ENCODE measurements at regions of chr3 and their contacts with region 1.

Region 1: GRCh38 chr3:109023656-109024254 is 70.1 kb upstream of the GUCA1C start:
- DNase-seq: peak; percentile 58
- ATAC-seq: peak; percentile 71
- H3K4me3 ChIP-seq: no peak overlapping the region
- H3K27ac ChIP-seq: no peak overlapping the region
- H3K4me1 ChIP-seq: no peaks in the 10 kb centered on the region
- H3K27me3 ChIP-seq: peaks cover 24% of the 10 kb centered on the region
- CTCF ChIP-seq: peak; percentile 92

Region 2: GRCh38 chr3:109081746-109082510 is 58.2 kb after region 1 on chr3:
- CTCF ChIA-PET with region 1: interaction called, 5 read pairs
- POLR2A ChIA-PET with region 1: no interaction called
- intact Hi-C with region 1: loop called (anchors 1 kb)
- DNase-seq: peak; percentile 57
- ATAC-seq: peak; percentile 68
- H3K4me3 ChIP-seq: no peak overlapping the region
- H3K27ac ChIP-seq: no peak overlapping the region
- H3K4me1 ChIP-seq: no peaks in the 10 kb centered on the region
- H3K27me3 ChIP-seq: peaks cover 34% of the 10 kb centered on the region
- CTCF ChIP-seq: peak; percentile 90

Region 3: DNA sequence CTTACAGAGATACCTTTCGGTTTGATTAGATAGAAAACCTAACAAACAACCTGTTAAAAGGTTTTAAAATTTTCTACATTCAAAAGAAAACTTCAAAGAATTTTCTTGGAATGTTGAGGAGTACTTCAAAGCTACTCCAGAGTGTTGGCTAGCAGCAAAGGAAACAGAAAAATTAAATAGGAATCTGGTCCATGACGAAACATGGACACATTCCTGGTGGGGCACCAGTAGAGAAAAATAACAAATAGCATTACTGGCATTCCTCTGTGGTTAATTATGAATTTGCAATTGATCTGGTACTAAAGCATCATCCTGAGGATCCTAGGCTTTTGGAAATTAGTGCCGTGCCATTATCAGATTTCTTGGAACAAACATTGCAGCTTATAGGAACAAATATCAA is 373.1 kb after region 1 on chr3:
- CTCF ChIA-PET with region 1: no interaction called
- POLR2A ChIA-PET with region 1: no interaction called
- intact Hi-C with region 1: loop called (anchors 5 kb)
- DNase-seq: no peak
- ATAC-seq: no peak
- H3K4me3 ChIP-seq: no peak overlapping the region
- H3K27ac ChIP-seq: no peak overlapping the region
- H3K4me1 ChIP-seq: no peaks in the 10 kb centered on the region
- H3K27me3 ChIP-seq: no peaks in the 10 kb centered on the region; the same call in 1 of the 2 replicates
- CTCF ChIP-seq: no peak

Region 4: DNA sequence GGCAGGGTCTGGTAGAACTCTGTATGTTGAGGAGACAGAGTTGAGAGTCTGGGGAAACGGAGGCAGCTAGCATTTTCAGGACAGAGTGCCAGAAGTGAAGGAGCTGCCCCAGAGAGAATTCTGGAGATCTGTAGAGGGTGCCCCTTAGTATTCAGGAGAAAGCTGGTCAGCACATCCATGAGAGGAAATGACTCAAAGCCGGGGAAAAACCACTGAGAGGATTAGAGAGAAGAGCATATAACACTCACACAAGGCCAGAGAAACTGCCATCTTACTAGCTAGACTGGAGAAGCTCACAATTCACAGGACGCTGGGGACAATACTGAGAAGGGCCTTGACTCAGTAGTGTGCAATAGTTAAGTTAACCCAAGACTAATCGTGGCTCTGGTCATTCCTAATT is 389.3 kb after region 1 on chr3:
- CTCF ChIA-PET with region 1: no interaction called
- POLR2A ChIA-PET with region 1: no interaction called
- intact Hi-C with region 1: no loop called
- DNase-seq: peak; percentile 29
- ATAC-seq: peak; percentile 59; the same call in 1 of the 2 replicates
- H3K4me3 ChIP-seq: no peak overlapping the region
- H3K27ac ChIP-seq: no peak overlapping the region
- H3K4me1 ChIP-seq: no peaks in the 10 kb centered on the region
- H3K27me3 ChIP-seq: peaks cover 2% of the 10 kb centered on the region; the same call in 1 of the 2 replicates
- CTCF ChIP-seq: no peak

Measured in PC-3 (cell line).